ENCODE measurements at regions of chr6 and their contacts with region 1.

Region 1: DNA sequence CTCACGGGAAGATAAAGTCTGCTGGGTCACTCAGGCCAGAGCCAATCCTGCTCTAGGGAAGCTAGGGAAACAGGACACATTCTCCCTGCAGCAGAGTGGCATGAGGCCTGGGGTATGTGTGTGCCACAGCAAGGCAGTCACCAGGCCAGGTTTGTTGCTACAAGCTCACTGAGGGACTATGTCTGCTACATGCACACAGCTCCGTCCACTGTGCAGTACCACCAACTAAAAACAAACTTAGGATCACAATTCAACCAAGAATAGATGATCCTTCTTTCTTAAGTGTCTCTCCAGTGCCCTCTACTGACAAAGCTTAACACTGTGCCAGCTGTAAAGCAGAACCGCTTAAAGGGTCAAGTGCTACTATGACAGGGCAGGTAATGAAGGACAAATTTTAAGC is 192.5 kb downstream of the PTPRK start:
- DNase-seq: peak; percentile 31
- H3K4me3 Mint-ChIP-seq: no peak overlapping the region
- H3K27ac Mint-ChIP-seq: no peak overlapping the region
- H3K4me1 Mint-ChIP-seq: no peaks in the 10 kb centered on the region
- H3K27me3 Mint-ChIP-seq: no peaks in the 10 kb centered on the region

Region 2: DNA sequence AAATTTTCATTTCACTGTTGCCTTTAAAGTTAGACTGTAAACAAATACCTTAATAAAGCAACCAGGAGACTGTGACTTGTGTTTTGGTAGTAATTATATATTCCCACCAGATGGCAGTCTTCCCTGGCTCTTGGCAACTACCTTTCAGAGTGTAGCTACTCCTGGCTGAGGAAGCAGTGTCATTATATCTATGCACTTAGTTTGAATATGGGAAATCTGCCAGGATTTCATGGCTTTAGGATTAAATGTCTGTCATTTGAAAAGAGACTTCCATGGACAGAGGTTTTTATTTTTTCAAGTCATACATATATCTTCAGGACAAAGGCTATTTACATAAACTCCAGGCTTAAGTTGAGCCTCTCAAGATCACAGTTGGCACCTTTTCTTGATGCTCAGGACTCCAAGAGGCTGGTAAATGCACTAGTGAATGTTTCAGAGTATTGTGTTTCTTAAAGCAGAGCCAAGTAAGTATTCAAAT is 590.8 kb before region 1 on chr6:
- CTCF ChIA-PET with region 1: interaction called, 22 read pairs
- POLR2A ChIA-PET with region 1: no interaction called
- DNase-seq: peak; percentile 34
- H3K4me3 Mint-ChIP-seq: no peak overlapping the region
- H3K27ac Mint-ChIP-seq: no peak overlapping the region
- H3K4me1 Mint-ChIP-seq: no peaks in the 10 kb centered on the region
- H3K27me3 Mint-ChIP-seq: no peaks in the 10 kb centered on the region

Region 3: GRCh38 chr6:128202169-128202765 is 125.6 kb before region 1 on chr6:
- CTCF ChIA-PET with region 1: no interaction called
- POLR2A ChIA-PET with region 1: no interaction called
- DNase-seq: no peak
- H3K4me3 Mint-ChIP-seq: no peak overlapping the region
- H3K27ac Mint-ChIP-seq: no peak overlapping the region
- H3K4me1 Mint-ChIP-seq: no peaks in the 10 kb centered on the region
- H3K27me3 Mint-ChIP-seq: no peaks in the 10 kb centered on the region